ENCODE measurements at regions of chr2 and their contacts with region 1.

Region 1: DNA sequence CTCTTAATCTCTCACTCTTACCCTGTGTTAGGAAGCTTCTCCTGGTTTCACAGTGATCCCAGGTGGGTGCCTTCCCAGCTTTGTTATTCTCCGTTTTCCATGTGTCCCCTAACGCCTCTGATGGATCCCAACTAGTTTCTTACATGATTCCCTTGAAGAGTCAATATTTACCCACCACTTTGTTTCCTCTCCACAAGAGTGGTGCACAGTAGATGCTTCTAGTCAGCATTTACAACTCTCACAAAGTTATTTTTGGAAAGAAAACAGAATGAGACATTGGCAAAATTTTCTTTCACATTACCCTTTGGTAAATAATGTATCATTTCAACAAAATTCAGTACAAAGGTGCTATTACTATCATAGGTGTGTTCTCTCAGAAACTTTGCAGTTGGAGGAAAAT is 1611.1 kb upstream of the ZEB2 start:
- DNase-seq: no peak
- H3K4me3 ChIP-seq: no peak overlapping the region
- H3K4me3 Mint-ChIP-seq: no peak overlapping the region
- H3K27ac Mint-ChIP-seq: no peak overlapping the region
- H3K4me1 ChIP-seq: no peaks in the 10 kb centered on the region
- H3K4me1 Mint-ChIP-seq: no peaks in the 10 kb centered on the region
- H3K27me3 ChIP-seq: no peaks in the 10 kb centered on the region
- H3K27me3 Mint-ChIP-seq: no peaks in the 10 kb centered on the region
- CTCF ChIP-seq: no peak

Region 2: DNA sequence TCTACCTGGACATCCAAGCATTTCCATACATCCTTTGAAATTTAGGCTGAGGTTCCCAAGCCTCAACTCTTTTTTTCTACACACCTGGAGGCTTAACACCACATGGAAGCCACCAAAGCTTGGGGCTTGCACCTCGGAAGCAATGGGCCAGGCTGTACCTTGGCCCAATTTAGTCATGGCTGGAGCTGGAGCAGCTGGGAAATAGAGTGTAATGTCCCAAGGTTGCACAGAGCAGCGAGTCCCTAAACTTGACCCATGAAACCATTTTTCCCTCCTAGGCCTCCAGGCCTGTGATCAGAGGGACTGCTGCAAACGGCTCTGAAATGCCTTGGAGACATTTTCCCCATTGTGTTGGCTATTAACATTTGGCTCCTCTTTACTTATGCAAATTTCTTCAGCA is 36.9 kb before region 1 on chr2:
- CTCF ChIA-PET with region 1: no interaction called
- POLR2A ChIA-PET with region 1: no interaction called
- intact Hi-C with region 1: loop called (anchors 5 kb)
- DNase-seq: no peak
- H3K4me3 ChIP-seq: no peak overlapping the region
- H3K4me3 Mint-ChIP-seq: no peak overlapping the region
- H3K27ac Mint-ChIP-seq: no peak overlapping the region
- H3K4me1 ChIP-seq: no peaks in the 10 kb centered on the region
- H3K4me1 Mint-ChIP-seq: no peaks in the 10 kb centered on the region
- H3K27me3 ChIP-seq: no peaks in the 10 kb centered on the region
- H3K27me3 Mint-ChIP-seq: no peaks in the 10 kb centered on the region
- CTCF ChIP-seq: no peak

Measured in Caco-2 (cell line).